Calu3 (cell line): ENCODE measurements at regions of chr18 and their contacts with region 1.

Region 1: DNA sequence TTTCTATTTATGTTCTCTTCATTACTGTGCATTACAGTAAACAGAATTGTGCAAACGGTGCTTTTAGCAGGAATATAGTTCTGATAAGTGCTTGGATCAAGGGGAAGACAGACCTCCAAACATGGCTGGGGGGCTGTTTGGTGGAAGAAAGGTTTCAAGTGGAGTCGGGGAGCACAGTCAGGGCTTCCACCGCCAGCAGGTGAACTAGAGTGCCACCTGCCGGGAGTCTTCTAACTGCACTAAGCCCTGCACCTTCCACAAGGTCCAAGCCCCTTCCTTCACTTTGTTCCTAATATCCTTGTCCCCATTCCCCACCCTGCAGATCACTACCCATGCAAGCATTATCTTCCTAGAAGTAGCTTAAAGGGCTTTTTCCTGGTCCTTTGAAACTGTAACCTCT is 11.1 kb downstream of the ONECUT2 start:
- DNase-seq: peak; percentile 77
- H3K4me3 Mint-ChIP-seq: peak overlapping the region; percentile 96
- H3K27ac Mint-ChIP-seq: peak overlapping the region; percentile 79
- H3K4me1 Mint-ChIP-seq: peaks cover 92% of the 10 kb centered on the region
- H3K27me3 Mint-ChIP-seq: no peaks in the 10 kb centered on the region
- CTCF ChIP-seq: peak; percentile 81

Region 2: DNA sequence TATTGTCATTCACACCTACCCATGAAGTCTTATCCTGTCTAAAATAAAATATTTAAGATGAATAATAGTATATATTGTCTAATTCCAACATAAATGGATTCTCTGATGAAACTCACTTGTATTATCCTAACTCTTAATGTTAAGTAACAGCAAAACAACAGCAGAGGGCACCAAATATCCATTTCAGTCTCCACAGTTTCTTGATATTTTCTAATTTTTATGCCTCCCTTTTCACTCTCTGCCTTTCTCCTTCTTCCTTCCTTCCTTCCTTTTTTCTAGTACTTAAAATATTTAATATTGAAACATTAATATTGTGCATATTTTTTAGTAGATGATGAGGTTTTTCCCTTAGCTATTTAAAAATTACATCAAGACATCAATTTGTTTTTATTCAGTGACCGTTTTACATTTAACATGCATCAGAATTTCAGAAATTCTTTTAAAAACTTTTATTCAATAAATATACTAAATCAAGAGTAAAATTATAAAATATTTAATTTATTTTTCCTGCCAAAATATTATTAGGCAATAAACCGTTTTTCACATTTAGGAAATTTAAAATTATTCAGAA is 697.5 kb before region 1 on chr18:
- CTCF ChIA-PET with region 1: no interaction called
- intact Hi-C with region 1: loop called (anchors 10 kb)
- DNase-seq: peak; percentile 23
- H3K4me3 Mint-ChIP-seq: no peak overlapping the region
- H3K27ac Mint-ChIP-seq: no peak overlapping the region
- H3K4me1 Mint-ChIP-seq: no peaks in the 10 kb centered on the region
- H3K27me3 Mint-ChIP-seq: no peaks in the 10 kb centered on the region
- CTCF ChIP-seq: no peak

Region 3: GRCh38 chr18:57141208-57142129 is 304.9 kb before region 1 on chr18:
- CTCF ChIA-PET with region 1: no interaction called
- intact Hi-C with region 1: loop called (anchors 10 kb)
- DNase-seq: peak; percentile 86
- H3K4me3 Mint-ChIP-seq: peak overlapping the region; percentile 47
- H3K27ac Mint-ChIP-seq: peak overlapping the region; percentile 95
- H3K4me1 Mint-ChIP-seq: peaks cover 24% of the 10 kb centered on the region
- H3K27me3 Mint-ChIP-seq: no peaks in the 10 kb centered on the region
- CTCF ChIP-seq: no peak

Region 4: DNA sequence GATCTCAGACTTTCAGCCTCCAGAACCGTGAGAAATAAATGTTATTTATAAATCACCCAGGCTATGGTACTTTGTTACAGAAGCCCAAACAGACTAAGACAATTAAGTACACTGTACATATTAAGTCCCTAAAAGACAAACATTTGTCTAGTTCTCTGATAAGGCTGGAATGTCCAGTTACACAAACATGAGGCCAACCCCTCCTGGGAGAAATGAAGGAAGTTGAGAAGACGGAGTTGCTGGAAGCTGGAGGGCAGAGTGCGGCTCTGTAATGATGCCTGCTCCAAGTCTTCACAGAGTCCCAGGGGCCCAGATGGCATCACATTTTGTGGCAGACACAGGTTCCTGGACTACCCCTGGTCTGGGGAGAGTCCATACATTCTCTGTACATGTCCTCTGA is 173.1 kb before region 1 on chr18:
- CTCF ChIA-PET with region 1: no interaction called
- intact Hi-C with region 1: loop called (anchors 5 kb)
- DNase-seq: peak; percentile 44
- H3K4me3 Mint-ChIP-seq: peak overlapping the region; percentile 16
- H3K27ac Mint-ChIP-seq: peak overlapping the region; percentile 66
- H3K4me1 Mint-ChIP-seq: peaks cover 90% of the 10 kb centered on the region
- H3K27me3 Mint-ChIP-seq: no peaks in the 10 kb centered on the region
- CTCF ChIP-seq: no peak

Region 5: DNA sequence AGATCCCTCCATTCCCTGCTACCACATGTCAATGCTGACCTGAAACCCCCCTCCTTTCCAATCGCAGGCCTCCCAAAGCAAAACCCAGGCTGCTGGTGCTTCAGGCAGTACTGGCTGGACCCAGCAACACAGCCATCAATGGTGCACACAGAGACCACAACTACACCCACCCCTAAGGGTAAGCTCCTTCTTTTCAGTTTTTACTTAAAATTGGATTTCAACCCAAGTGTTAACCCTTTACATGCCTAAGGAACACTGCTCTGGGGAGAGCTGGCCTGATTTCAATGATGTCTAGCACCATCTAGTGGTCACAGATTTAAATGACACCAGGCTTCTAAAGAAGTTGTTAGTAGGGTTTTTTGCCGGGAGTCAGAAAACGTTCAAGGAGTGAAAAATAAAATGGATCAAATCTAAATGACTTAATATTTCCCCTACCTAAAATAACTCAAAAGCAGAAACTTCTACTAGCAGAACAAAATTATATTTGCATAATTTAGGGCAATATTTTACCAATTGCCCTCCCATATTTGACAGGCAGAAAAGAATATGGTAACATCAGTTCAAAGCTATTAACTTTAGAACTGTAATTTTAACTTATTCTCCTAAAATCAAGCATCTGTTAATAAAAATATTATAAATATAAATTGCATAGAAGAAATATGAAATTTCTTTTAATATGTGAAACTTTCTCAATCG is 115.6 kb after region 1 on chr18:
- CTCF ChIA-PET with region 1: interaction called, 3 read pairs
- intact Hi-C with region 1: loop called (anchors 5 kb)
- DNase-seq: peak; percentile 44
- H3K4me3 Mint-ChIP-seq: no peak overlapping the region
- H3K27ac Mint-ChIP-seq: no peak overlapping the region
- H3K4me1 Mint-ChIP-seq: peaks cover 7% of the 10 kb centered on the region
- H3K27me3 Mint-ChIP-seq: no peaks in the 10 kb centered on the region
- CTCF ChIP-seq: peak; percentile 91